Panc1 (cell line): ENCODE measurements at regions of chr15 and their contacts with region 1.

Region 1: GRCh38 chr15:40952901-40953712 is at the start of gene CHAC1:
- DNase-seq: peak; percentile 92
- ATAC-seq: peak; percentile 97
- H3K4me3 ChIP-seq: peak within 1 kb of the TSS; percentile 87 to 98
- H3K27ac ChIP-seq: peak within 1 kb of the TSS; percentile 92
- H3K4me1 ChIP-seq: peaks cover 10% of the 10 kb centered on the region
- H3K27me3 ChIP-seq: no peaks in the 10 kb centered on the region
- CTCF ChIP-seq: no peak
- total RNA-seq, gene CHAC1: 15.5 TPM

Region 2: GRCh38 chr15:40891810-40892446 is 61.2 kb before region 1 on chr15:
- CTCF ChIA-PET with region 1: no interaction called
- POLR2A ChIA-PET with region 1: no interaction called
- in situ Hi-C with region 1: no loop called
- intact Hi-C with region 1: no loop called
- DNase-seq: no peak
- ATAC-seq: peak; percentile 42
- H3K4me3 ChIP-seq: no peak overlapping the region
- H3K27ac ChIP-seq: no peak overlapping the region
- H3K4me1 ChIP-seq: peaks cover 9% of the 10 kb centered on the region
- H3K27me3 ChIP-seq: no peaks in the 10 kb centered on the region
- CTCF ChIP-seq: peak; percentile 93

Region 3: DNA sequence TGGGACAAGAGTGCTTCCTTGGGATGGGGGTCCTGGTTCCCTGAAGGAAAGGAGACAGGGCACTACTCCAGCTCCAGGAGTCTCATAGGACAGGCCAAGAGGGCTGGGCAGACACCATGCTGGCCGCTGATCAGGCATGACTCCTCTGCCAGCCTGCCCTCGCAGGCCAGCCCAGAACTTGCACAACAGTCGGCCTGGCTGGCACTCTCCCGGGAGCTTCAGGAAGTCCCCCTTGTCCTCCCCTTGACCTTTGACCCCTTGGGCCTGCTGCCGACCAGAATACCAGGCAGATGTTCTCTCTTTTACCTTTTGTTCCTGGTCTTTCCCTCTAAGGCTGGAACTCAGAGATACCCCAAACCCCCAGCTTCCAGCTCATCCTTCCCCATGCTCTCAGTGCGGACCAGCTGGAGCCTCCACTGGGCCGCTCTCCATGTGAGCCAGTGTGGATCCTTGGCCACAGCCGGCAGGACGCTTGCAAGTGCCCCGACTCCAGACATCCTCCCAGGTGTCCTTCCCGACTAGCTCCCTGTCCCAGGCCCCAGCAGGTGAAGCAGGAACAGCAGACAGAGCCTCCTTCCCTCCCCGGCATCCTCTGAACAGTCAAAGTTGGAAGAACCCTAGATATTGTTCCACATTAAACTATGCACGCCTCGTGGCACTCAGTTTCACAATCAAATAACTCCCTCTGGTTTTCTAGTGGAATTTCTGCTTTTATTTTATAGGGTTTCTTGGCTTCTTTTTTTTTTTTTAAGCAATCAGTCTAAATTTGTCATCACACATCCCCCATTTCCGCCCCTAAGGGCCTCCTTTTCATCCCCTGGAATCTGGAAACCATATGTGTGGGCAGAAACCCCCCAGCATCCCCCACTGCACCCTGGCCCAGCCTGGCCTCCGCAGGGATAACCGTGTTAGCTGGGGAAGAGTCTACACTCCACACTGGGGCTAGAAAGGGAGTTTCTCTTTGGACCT is 43.2 kb before region 1 on chr15:
- CTCF ChIA-PET with region 1: no interaction called
- POLR2A ChIA-PET with region 1: no interaction called
- in situ Hi-C with region 1: no loop called
- intact Hi-C with region 1: no loop called
- DNase-seq: no peak
- ATAC-seq: no peak
- H3K4me3 ChIP-seq: no peak overlapping the region
- H3K27ac ChIP-seq: no peak overlapping the region
- H3K4me1 ChIP-seq: peaks cover 22% of the 10 kb centered on the region
- H3K27me3 ChIP-seq: no peaks in the 10 kb centered on the region
- CTCF ChIP-seq: no peak

Region 4: GRCh38 chr15:40936234-40936708 is 16.8 kb before region 1 on chr15:
- CTCF ChIA-PET with region 1: interaction called, 3 read pairs
- POLR2A ChIA-PET with region 1: interaction called, 15 read pairs
- in situ Hi-C with region 1: no loop called
- intact Hi-C with region 1: no loop called
- DNase-seq: no peak
- ATAC-seq: no peak
- H3K4me3 ChIP-seq: no peak overlapping the region
- H3K27ac ChIP-seq: no peak overlapping the region
- H3K4me1 ChIP-seq: peaks cover 12% of the 10 kb centered on the region
- H3K27me3 ChIP-seq: no peaks in the 10 kb centered on the region
- CTCF ChIP-seq: no peak

Region 5: DNA sequence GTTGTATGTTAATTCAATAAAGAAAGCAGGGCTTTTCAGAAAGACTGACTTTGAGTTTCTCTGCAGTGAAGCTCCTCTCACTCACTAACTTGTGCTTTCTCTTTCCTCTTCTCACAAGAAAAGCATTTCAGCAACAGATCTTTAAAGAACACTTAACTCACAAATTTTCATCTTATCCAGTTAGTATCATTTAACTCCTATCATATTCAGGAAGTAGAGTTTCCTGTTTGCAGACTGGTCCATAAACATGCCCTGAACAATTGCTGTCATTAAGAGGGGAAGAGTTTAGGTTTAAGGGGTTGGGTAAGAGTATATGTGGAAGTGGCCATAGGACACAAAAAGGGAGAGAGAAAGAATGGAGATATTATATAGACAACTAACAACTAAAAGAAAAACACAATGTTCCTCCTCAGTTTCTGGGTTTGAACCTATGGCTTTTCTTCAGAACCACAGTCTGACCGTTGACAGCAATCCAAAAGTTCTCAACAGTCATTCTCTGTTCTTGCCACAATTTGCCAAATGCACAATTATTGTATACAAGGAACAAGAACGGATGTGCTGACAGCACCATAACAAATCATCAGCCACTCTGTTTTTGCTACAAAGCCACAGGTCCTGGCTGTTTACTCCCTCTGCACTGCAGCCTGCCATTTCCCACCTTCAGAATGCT is 64.1 kb after region 1 on chr15:
- CTCF ChIA-PET with region 1: no interaction called
- POLR2A ChIA-PET with region 1: interaction called, 10 read pairs
- in situ Hi-C with region 1: no loop called
- intact Hi-C with region 1: no loop called
- DNase-seq: no peak
- ATAC-seq: no peak
- H3K4me3 ChIP-seq: no peak overlapping the region
- H3K27ac ChIP-seq: no peak overlapping the region
- H3K4me1 ChIP-seq: no peaks in the 10 kb centered on the region
- H3K27me3 ChIP-seq: no peaks in the 10 kb centered on the region
- CTCF ChIP-seq: no peak

Region 6: DNA sequence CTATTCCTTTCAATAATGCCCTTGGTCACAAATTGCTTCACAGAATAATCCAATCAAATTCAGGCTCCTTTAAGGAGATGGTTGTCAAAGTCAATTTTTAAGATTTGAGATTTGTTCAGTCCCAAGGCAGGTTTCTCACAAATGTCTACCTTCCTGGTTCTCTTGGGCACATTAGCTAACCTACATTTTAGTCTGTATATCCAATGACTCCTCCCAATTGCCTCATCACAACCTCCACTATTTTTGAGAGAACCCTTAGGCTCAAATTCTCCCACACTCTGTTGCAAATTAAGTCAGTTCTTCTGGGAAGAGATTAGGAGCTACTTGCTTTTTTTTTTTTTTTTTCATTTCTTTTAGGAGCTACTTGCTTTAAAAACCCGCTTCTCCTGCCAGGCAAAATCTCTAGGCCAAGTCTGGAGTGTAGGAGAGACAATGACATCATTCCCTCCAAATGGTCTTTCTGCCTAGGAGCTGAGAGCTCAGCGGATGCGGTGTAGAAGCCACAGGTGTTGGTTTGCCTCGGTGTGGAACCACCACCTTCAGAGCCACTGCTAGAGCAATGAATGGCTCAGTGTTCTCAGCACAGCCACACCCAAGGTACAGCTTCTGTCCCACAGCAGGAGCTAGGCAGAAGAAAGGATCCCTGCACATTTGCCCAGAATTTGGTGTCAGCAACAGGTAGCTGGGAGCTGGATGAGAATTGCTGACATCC is 173.0 kb after region 1 on chr15:
- CTCF ChIA-PET with region 1: no interaction called
- POLR2A ChIA-PET with region 1: interaction called, 13 read pairs
- in situ Hi-C with region 1: no loop called
- intact Hi-C with region 1: no loop called
- DNase-seq: no peak
- ATAC-seq: no peak
- H3K4me3 ChIP-seq: no peak overlapping the region
- H3K27ac ChIP-seq: no peak overlapping the region
- H3K4me1 ChIP-seq: no peaks in the 10 kb centered on the region
- H3K27me3 ChIP-seq: no peaks in the 10 kb centered on the region
- CTCF ChIP-seq: no peak

Region 7: GRCh38 chr15:41512940-41513510 is 559.9 kb after region 1 on chr15:
- CTCF ChIA-PET with region 1: no interaction called
- POLR2A ChIA-PET with region 1: no interaction called
- in situ Hi-C with region 1: no loop called
- intact Hi-C with region 1: no loop called
- DNase-seq: no peak
- ATAC-seq: no peak
- H3K4me3 ChIP-seq: no peak overlapping the region
- H3K27ac ChIP-seq: no peak overlapping the region
- H3K4me1 ChIP-seq: peaks cover under 1% of the 10 kb centered on the region
- H3K27me3 ChIP-seq: no peaks in the 10 kb centered on the region
- CTCF ChIP-seq: no peak